Colonic mucosa (tissue), 4 donors: ENCODE measurements at regions of chr18 and their contacts with region 1.

Region 1: GRCh38 chr18:58402247-58402646 is 226.6 kb downstream of the ALPK2 start:
- DNase-seq: no peak
- H3K4me3 ChIP-seq: no peak overlapping the region
- H3K27ac ChIP-seq: no peak overlapping the region
- H3K4me1 ChIP-seq: no peaks in the 10 kb centered on the region
- H3K27me3 ChIP-seq: no peaks in the 10 kb centered on the region
- CTCF ChIP-seq: no peak

Region 2: DNA sequence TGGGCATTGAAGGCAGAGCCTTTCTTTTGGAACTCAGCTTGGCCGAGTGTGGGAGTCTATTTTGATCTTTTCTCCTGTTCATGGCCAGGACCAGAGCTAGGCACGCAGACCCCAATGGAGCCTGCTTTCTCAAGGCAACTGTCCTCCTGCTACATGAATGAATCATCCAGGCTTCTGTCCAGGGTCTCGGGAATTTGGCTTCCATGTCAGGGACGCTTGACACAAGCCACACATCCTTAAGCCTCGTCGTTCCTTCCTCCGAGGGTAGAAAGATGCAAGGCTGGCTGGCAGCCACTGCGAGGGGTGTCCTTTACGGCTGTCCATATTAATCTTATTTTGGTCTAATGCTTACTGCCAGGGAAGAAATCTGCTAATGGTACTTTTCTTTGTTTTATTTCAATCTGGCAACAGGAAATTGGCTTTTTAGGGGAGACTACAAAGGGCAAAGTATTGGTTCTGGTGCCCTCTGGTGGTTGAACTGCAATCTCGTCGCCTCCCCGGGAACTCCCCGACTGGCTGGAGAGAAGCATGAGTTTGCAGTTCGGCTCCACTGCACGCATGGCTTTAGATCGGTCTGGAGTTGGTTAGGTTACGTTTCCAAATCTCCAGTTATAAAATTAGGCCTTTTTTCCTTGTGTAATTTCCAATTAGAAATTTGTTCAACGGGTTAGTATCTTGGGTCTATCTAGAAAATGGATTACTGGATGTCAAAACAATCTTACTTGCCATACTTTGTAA is 91.4 kb after region 1 on chr18:
- intact Hi-C with region 1: loop called (anchors 5 kb)
- DNase-seq: peak; percentile 89
- H3K4me3 ChIP-seq: no peak overlapping the region
- H3K27ac ChIP-seq: no peak overlapping the region
- H3K4me1 ChIP-seq: no peaks in the 10 kb centered on the region
- H3K27me3 ChIP-seq: no peaks in the 10 kb centered on the region
- CTCF ChIP-seq: peak; percentile 90

Region 3: DNA sequence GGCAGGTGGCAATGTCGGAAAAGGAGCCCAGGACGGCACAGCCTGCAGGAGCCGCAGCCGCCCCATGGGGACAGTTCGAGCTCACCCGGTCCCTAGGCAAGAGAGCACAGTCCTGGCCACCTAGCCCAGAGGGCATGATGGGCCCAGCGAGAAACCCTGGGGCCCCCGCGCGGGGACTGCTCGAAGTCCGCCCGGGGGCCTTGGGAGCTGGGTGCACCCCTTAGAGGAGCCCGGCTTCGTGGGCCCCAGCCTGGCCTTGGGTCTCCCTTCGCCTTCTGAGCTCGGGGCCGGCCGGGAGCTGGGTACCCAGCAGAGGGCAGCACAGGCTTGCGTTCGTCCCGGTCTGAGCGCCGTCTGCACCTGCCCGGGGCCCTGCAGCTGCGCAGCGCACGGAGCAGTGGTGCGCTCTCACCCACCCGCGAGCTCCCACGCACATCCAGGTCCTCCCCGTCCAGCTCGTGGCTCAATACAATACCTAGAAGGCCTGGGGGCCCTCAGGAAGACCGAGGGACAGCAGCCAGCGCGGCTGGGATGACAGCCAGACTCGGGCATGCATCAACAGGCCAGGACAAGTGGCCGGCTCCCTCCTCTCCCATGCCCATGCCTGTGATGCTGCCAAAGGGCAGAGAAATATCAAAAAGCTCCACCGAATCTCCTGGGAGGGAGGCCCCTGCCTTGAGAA is 366.2 kb after region 1 on chr18:
- intact Hi-C with region 1: loop called (anchors 10 kb)
- DNase-seq: peak; percentile 69
- H3K4me3 ChIP-seq: peak overlapping the region; percentile 12
- H3K27ac ChIP-seq: no peak overlapping the region
- H3K4me1 ChIP-seq: peaks cover 6% of the 10 kb centered on the region
- H3K27me3 ChIP-seq: no peaks in the 10 kb centered on the region
- CTCF ChIP-seq: peak; percentile 75